Endothelial cell of umbilical vein (primary cell): ENCODE measurements at regions of chr11 and their contacts with region 1.

Region 1: GRCh38 chr11:20127671-20128527 is 32.4 kb downstream of the DBX1 start:
- DNase-seq: peak; percentile 69
- H3K4me3 ChIP-seq: no peak overlapping the region
- H3K27ac ChIP-seq: no peak overlapping the region
- H3K4me1 ChIP-seq: peaks cover 4% of the 10 kb centered on the region
- H3K27me3 ChIP-seq: no peaks in the 10 kb centered on the region
- CTCF ChIP-seq: peak; percentile 82 to 91
- POLR2A ChIP-seq: no peak

Region 2: GRCh38 chr11:19727246-19727645 is 400.7 kb before region 1 on chr11:
- CTCF ChIA-PET with region 1: no interaction called
- POLR2A ChIA-PET with region 1: no interaction called
- dilution Hi-C with region 1: no loop called
- intact Hi-C with region 1: no loop called
- DNase-seq: no peak
- H3K4me3 ChIP-seq: no peak overlapping the region
- H3K27ac ChIP-seq: no peak overlapping the region
- H3K4me1 ChIP-seq: peaks cover 17% of the 10 kb centered on the region
- H3K27me3 ChIP-seq: no peaks in the 10 kb centered on the region
- CTCF ChIP-seq: no peak
- POLR2A ChIP-seq: no peak

Region 3: GRCh38 chr11:19938169-19938856 is 189.6 kb before region 1 on chr11:
- CTCF ChIA-PET with region 1: interaction called, 17 read pairs
- POLR2A ChIA-PET with region 1: no interaction called
- dilution Hi-C with region 1: no loop called
- intact Hi-C with region 1: loop called (anchors 1 kb)
- DNase-seq: peak; percentile 71
- H3K4me3 ChIP-seq: no peak overlapping the region
- H3K27ac ChIP-seq: no peak overlapping the region
- H3K4me1 ChIP-seq: peaks cover 9% of the 10 kb centered on the region
- H3K27me3 ChIP-seq: no peaks in the 10 kb centered on the region
- CTCF ChIP-seq: peak; percentile 79 to 88
- POLR2A ChIP-seq: no peak

Region 4: DNA sequence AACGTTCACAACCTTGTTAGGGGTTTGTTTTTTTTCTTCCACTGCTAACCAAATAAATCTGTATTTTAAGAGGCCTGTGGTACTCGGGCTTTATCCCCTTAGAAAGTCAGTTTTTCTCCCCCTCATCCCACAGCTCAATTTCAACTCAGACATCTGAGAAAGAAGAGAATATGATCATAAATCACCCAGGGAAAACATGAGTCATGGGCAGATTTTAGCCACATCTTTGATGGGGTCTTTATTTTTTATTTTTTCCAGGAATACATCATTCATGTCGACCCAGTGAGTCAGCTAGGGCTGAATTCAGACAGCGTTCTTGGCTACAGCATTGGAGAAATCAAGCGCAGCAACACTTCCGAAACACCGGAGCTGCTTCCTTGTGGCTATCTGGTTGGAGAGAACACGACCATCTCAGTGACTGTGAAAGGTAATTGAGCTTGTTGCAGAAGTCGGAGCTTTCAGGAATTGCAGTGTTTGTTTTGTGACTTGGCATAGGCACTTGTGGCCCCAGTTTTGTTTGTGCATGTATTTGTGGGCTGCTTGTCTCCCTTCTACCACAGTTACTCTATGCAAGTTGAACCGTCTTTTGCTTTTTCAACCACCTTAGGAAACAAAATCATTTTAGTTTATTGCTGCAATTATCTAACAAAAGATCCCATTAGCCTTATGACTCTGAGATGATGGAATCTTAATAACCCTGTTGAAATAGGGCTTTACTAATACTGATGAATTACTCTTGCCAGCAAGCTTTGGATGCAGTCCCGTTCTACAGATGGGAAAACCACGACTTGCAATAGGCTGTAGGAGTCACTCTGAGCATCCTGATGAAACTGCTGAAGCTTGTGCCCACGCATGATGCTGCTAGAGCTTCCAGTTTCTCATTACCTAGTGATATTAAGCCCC is 30.3 kb before region 1 on chr11:
- CTCF ChIA-PET with region 1: interaction called, 22 read pairs
- POLR2A ChIA-PET with region 1: no interaction called
- dilution Hi-C with region 1: no loop called
- intact Hi-C with region 1: loop called (anchors 1 kb)
- DNase-seq: peak; percentile 99
- H3K4me3 ChIP-seq: peak overlapping the region in 1 of 3 experiments; percentile 1
- H3K27ac ChIP-seq: peak overlapping the region; percentile 94
- H3K4me1 ChIP-seq: peaks cover 64% of the 10 kb centered on the region
- H3K27me3 ChIP-seq: no peaks in the 10 kb centered on the region
- CTCF ChIP-seq: no peak
- POLR2A ChIP-seq: peak; percentile 34

Region 5: DNA sequence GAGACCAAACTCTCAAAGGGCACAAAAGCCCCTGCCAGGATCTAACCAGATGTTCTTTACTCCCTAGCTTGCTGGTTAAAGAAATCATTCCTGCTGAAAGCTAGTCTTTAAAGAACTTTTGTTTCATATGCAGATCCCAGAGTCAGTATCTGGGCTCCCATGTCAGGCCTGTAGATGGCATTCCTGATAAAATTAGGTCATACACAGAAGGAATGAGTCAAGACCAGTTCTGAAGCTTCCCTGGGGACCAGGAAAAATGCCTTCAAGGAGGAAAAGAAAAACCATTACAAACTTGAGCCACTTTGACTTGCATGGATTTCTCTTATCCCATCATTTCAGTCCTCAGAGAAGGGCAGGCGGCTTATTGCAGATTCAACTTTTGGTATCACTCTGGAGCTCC is 26.5 kb after region 1 on chr11:
- CTCF ChIA-PET with region 1: interaction called, 21 read pairs
- POLR2A ChIA-PET with region 1: no interaction called
- dilution Hi-C with region 1: no loop called
- intact Hi-C with region 1: no loop called
- DNase-seq: no peak
- H3K4me3 ChIP-seq: no peak overlapping the region
- H3K27ac ChIP-seq: no peak overlapping the region
- H3K4me1 ChIP-seq: no peaks in the 10 kb centered on the region
- H3K27me3 ChIP-seq: peaks cover 54 to 68% of the 10 kb centered on the region in 2 experiments
- CTCF ChIP-seq: no peak
- POLR2A ChIP-seq: no peak

Region 6: GRCh38 chr11:20355221-20356219 is 227.6 kb after region 1 on chr11:
- CTCF ChIA-PET with region 1: interaction called, 137 read pairs
- POLR2A ChIA-PET with region 1: no interaction called
- dilution Hi-C with region 1: no loop called
- intact Hi-C with region 1: loop called (anchors 1 kb)
- DNase-seq: peak; percentile 64
- H3K4me3 ChIP-seq: no peak overlapping the region
- H3K27ac ChIP-seq: no peak overlapping the region
- H3K4me1 ChIP-seq: peaks cover 6% of the 10 kb centered on the region
- H3K27me3 ChIP-seq: peaks cover 2 to 10% of the 10 kb centered on the region in 2 experiments
- CTCF ChIP-seq: peak; percentile 47 to 68
- POLR2A ChIP-seq: no peak

Region 7: DNA sequence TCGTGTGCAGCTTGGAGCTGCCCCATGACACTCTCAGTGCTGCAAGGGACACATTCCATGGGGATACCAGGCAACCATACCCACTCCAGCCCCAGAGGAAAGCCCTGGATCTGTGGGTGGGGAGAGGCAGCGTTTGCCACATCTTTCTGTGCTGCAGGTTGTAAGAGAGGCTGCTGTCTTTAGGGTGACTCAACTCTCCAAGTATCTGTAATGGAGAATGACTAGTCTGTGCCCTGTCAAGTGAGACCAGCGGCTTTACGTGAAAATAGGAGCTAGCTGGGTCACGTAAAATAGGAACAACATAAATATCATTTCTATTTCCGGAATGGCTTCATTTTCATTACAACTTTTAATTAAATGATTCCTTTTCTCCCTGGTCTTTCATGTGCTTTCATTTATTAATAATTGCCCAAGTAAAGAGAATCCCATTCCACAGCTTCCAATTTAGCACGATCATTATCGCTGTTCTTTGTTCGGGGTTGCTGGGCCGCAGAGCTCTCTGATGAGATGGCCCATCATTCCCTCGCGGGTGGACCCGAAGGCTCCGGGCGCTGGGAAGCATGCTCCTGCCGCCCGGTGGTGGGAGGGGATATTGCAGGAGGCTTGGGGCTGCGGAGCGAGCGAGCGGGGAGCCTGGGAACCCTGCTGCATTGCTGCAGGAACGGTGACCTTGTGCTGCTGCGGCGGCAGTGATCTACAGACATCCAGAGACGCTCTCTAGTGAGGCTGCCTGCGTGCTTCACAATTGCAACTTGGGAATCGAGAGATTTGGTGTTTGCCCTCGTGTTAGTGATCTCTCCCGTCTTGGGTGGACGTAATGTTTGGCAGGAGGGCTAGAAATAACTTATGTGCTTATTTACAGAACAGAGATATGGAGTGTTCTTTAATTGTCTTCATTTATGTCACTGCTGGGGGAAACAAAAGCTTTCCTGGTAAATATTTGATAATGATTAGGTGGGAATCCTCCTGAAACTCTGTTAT is 482.1 kb after region 1 on chr11:
- CTCF ChIA-PET with region 1: interaction called, 34 read pairs
- POLR2A ChIA-PET with region 1: no interaction called
- dilution Hi-C with region 1: no loop called
- intact Hi-C with region 1: no loop called
- DNase-seq: peak; percentile 65
- H3K4me3 ChIP-seq: no peak overlapping the region
- H3K27ac ChIP-seq: no peak overlapping the region
- H3K4me1 ChIP-seq: no peaks in the 10 kb centered on the region
- H3K27me3 ChIP-seq: peaks cover 23 to 42% of the 10 kb centered on the region in 2 experiments
- CTCF ChIP-seq: peak; percentile 83 to 96
- POLR2A ChIP-seq: no peak